PC-9 (cell line): ENCODE measurements at regions of chr14 and their contacts with region 1.

Region 1: DNA sequence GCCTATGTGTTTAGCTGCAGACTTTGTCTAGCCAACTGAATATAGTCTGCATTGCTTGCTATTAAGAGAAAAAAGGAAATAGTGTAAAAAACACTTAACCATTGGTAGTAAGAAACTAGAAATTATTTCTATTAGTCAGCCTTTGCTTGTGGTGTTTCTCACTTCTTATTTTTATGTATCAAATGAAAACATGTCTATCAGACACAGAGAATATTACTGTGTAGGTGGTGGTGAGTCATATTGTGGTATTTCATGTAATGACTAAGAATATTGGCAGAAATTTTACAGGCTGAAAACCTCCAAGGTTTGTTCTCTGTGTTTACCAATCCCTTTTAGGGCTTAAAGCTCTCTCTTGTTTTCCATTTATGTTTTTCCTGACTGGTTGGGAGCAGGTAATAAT is 87.2 kb downstream of the DAAM1 start:
- DNase-seq: peak in 1 of 2 experiments; percentile 90
- H3K4me3 ChIP-seq: no peak overlapping the region
- H3K27ac ChIP-seq: peak overlapping the region; percentile 73
- H3K4me1 ChIP-seq: peaks cover 59% of the 10 kb centered on the region
- H3K27me3 ChIP-seq: no peaks in the 10 kb centered on the region
- CTCF ChIP-seq: no peak

Region 2: GRCh38 chr14:59296508-59296907 is 20.9 kb after region 1 on chr14:
- CTCF ChIA-PET with region 1: no interaction called
- POLR2A ChIA-PET with region 1: no interaction called
- intact Hi-C with region 1: no loop called
- DNase-seq: no peak
- H3K4me3 ChIP-seq: no peak overlapping the region
- H3K27ac ChIP-seq: no peak overlapping the region
- H3K4me1 ChIP-seq: peaks cover 10% of the 10 kb centered on the region; the same call in 1 of the 2 replicates
- H3K27me3 ChIP-seq: no peaks in the 10 kb centered on the region
- CTCF ChIP-seq: no peak

Region 3: DNA sequence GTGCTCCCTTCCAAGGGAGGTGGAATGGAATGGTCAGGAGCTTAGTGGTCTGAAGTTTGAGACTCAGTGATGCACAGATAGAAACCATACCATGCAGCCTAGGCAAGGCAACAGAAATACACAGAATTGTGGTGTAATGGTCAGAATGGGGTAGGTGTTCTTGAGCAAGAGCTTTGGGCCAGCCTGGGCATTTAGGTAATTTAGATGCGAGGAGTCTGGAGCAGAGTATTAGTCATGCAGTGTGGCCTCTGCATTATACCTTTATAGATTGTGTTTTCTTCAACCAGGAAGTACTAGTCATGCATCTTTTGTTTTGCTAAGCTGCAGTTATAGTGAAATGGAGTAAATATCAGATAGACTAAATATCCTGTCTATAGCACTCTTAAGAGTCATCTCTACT is 31.1 kb after region 1 on chr14:
- CTCF ChIA-PET with region 1: interaction called, 3 read pairs
- POLR2A ChIA-PET with region 1: interaction called, 3 read pairs
- intact Hi-C with region 1: loop called (anchors 1 kb)
- DNase-seq: peak; percentile 23 to 86
- H3K4me3 ChIP-seq: no peak overlapping the region
- H3K27ac ChIP-seq: peak overlapping the region; percentile 64
- H3K4me1 ChIP-seq: peaks cover 35% of the 10 kb centered on the region
- H3K27me3 ChIP-seq: no peaks in the 10 kb centered on the region
- CTCF ChIP-seq: no peak

Region 4: GRCh38 chr14:59343585-59343984 is 67.9 kb after region 1 on chr14:
- CTCF ChIA-PET with region 1: no interaction called
- POLR2A ChIA-PET with region 1: no interaction called
- intact Hi-C with region 1: loop called (anchors 2 kb)
- DNase-seq: peak; percentile 32 to 43
- H3K4me3 ChIP-seq: no peak overlapping the region
- H3K27ac ChIP-seq: peak overlapping the region; percentile 81
- H3K4me1 ChIP-seq: peaks cover 43% of the 10 kb centered on the region
- H3K27me3 ChIP-seq: no peaks in the 10 kb centered on the region
- CTCF ChIP-seq: no peak

Region 5: DNA sequence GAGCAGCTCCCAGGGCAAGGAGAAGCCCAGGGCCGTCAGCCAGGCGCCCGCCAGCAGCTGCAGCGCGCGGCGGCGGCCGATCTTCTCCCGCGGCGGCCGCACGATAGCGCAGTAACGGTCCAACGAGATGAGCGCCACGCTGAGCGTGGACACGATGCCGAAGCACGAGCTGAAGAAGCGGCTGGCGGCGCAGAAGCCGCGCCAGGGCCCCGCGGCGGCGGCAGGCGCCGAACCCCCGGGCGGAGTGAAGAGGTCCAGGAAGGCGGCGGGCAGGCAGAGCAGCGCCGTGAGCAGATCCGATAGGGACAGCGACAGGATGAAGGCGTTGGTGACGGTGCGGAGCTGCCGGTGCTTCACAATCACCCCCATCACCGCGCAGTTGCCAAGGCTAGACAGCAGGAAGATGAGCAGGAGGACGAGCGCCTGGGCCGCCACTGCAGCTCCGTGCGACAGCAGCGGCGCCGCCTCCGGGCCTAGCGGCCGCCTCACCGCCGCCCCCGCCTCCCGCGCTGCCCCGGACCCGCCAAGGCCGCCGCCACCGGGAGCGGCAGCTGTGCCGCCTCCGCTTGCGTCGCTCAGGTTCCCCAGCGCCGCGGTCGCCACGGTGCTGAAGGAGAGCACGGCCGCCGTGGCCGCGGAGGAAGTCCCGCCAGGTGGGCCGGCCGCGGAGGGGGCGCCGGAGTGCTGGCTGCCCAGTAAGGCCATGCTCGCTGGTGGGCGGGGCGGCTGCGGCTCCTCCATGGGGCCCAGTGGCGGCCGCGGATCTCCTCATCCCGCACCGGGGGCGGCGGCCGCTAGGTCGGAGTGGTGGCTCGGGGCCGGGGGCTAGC is 189.0 kb after region 1 on chr14:
- CTCF ChIA-PET with region 1: no interaction called
- POLR2A ChIA-PET with region 1: no interaction called
- intact Hi-C with region 1: no loop called
- DNase-seq: no peak
- H3K4me3 ChIP-seq: no peak overlapping the region
- H3K27ac ChIP-seq: no peak overlapping the region
- H3K4me1 ChIP-seq: no peaks in the 10 kb centered on the region
- H3K27me3 ChIP-seq: no peaks in the 10 kb centered on the region
- CTCF ChIP-seq: no peak

Region 6: DNA sequence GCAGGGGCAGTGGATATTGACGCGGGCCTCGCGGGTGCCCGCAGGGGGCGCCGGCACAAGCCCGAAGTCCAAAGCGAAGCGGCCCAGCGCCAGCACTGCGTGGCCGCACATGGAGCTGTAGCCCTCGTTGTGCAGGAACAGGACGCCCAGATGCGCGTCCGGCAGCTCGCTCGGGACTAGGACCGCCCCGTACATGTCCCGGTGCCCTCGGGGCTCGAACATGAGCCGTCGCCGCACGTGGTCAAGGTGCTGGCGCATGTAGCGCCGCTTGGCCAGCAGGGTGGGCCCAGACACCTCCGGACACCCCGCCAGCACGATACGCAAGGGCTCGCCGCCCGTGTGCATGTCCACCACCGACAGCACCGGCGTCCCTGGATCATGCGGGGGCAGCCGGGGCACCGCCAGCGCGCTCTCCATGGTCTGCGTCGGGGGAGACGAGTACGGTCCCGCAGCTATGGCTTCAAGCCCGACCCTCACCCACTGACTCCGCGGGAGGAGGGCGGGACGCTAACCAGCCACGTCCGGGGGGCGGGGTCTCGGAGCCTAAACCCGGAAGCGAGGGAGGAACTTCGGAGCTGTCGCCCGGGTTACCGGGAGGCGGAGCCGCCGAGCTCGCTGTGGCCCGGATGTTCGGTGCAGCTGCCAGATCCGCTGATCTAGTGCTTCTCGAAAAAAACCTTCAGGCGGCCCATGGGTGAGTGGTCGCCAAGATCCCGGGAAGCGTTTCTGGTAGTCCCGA is 208.4 kb after region 1 on chr14 and contains the starts of genes JKAMP and L3HYPDH:
- CTCF ChIA-PET with region 1: no interaction called
- POLR2A ChIA-PET with region 1: interaction called, 3 read pairs
- intact Hi-C with region 1: loop called (anchors 5 kb)
- DNase-seq: peak; percentile 89 to 96
- H3K4me3 ChIP-seq: peak within 1 kb of the TSS; percentile 99
- H3K27ac ChIP-seq: peak within 1 kb of the TSS; percentile 96
- H3K4me1 ChIP-seq: peaks cover 46% of the 10 kb centered on the region
- H3K27me3 ChIP-seq: no peaks in the 10 kb centered on the region
- CTCF ChIP-seq: peak; percentile 50
- total RNA-seq, gene JKAMP: 54.6 and 60.1 TPM in 2 replicates
- total RNA-seq, gene L3HYPDH: 96.3 and 121 TPM in 2 replicates